Activated B cell treated with CpG ODN at 0.5 μM for 24 hours (primary cell): ENCODE measurements at regions of chr1 and their contacts with region 1.

Region 1: DNA sequence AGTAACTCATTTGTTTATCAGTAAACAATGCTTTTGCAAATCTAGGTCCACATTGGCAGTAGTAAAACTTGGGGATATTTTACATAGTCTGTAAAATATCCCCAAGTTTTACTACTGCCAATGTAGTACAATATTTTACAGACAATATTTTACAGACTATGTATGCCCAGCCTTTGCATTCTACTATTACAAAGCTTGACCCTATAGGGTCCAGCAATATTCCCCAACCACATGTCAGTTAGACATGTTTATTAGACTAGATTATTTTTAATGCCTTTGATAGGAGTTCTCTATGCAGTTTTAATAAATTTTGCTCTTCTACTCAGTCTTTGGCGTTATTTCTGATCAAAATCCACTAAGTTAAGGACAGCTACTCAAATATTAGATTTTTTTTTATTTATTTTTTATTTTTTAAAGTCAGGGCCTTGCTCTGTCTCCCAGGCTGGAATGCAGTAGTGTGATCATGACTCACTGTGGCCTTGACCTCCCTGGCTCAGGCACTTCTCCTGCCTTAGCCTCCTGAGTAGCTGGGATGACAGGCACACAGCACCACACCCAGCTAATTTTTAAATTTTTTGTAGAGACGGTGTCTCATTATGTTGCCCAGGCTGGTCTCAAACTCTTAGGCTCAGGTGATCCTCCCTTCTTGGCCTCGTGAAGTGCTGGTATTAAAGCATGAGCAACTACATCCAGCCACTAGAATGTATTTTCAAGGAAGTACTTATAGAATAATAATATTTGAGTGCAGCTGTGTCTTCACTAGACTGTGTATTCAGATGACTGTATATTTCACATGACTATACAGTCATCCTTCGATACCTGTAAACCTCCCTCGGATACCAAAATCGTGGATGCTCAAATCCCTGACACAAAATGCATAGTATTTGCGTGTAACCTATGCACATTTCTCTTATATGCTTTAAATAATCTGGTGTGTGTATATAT is 19.8 kb downstream of the MIER1 start:
- DNase-seq: no peak
- ATAC-seq: no peak
- H3K4me3 Mint-ChIP-seq: no peak overlapping the region
- H3K27ac Mint-ChIP-seq: no peak overlapping the region
- H3K4me1 Mint-ChIP-seq: peaks cover 7% of the 10 kb centered on the region
- H3K27me3 Mint-ChIP-seq: no peaks in the 10 kb centered on the region
- CTCF ChIP-seq: no peak

Region 2: GRCh38 chr1:66929999-66930822 is 14.4 kb before region 1 on chr1:
- CTCF ChIA-PET with region 1: no interaction called
- POLR2A ChIA-PET with region 1: interaction called, 3 read pairs
- intact Hi-C with region 1: loop called (anchors 2 kb)
- DNase-seq: peak; percentile 98
- ATAC-seq: peak; percentile 78
- H3K4me3 Mint-ChIP-seq: peak overlapping the region; percentile 94
- H3K27ac Mint-ChIP-seq: peak overlapping the region; percentile 93
- H3K4me1 Mint-ChIP-seq: peaks cover 57% of the 10 kb centered on the region
- H3K27me3 Mint-ChIP-seq: no peaks in the 10 kb centered on the region
- CTCF ChIP-seq: no peak

Region 3: GRCh38 chr1:66968574-66968973 is 24.0 kb after region 1 on chr1:
- CTCF ChIA-PET with region 1: no interaction called
- POLR2A ChIA-PET with region 1: no interaction called
- intact Hi-C with region 1: loop called (anchors 2 kb)
- DNase-seq: no peak
- ATAC-seq: no peak
- H3K4me3 Mint-ChIP-seq: no peak overlapping the region
- H3K27ac Mint-ChIP-seq: no peak overlapping the region
- H3K4me1 Mint-ChIP-seq: no peaks in the 10 kb centered on the region
- H3K27me3 Mint-ChIP-seq: no peaks in the 10 kb centered on the region
- CTCF ChIP-seq: no peak

Region 4: DNA sequence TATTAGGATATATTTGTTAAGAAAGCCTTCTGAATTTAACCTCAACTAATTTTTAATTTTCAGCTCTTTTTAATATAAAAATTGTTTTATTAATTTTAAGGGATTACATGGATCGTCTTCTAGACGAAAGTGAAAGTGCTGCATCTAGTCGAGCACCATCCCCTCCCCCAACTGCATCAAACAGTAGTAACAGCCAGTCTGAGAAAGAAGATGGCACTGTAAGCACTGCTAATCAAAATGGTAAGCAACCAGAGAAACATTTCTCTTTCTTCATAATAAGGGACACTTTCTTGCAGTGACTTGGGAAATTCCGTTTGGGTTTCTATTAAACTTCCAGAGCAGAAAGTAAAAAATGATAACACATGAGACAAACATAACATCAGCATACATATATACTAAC is 37.1 kb after region 1 on chr1:
- CTCF ChIA-PET with region 1: no interaction called
- POLR2A ChIA-PET with region 1: no interaction called
- intact Hi-C with region 1: loop called (anchors 5 kb)
- DNase-seq: no peak
- ATAC-seq: peak; percentile 52
- H3K4me3 Mint-ChIP-seq: no peak overlapping the region
- H3K27ac Mint-ChIP-seq: peak overlapping the region; percentile 42
- H3K4me1 Mint-ChIP-seq: peaks cover 19% of the 10 kb centered on the region
- H3K27me3 Mint-ChIP-seq: no peaks in the 10 kb centered on the region
- CTCF ChIP-seq: no peak